ENCODE measurements at regions of chr13 and their contacts with region 1.

Region 1: GRCh38 chr13:79679334-79679733 is 198.4 kb downstream of the NDFIP2 start:
- DNase-seq: peak; percentile 85
- H3K4me3 ChIP-seq: no peak overlapping the region
- H3K27ac ChIP-seq: no peak overlapping the region
- H3K4me1 ChIP-seq: no peaks in the 10 kb centered on the region
- H3K27me3 ChIP-seq: no peaks in the 10 kb centered on the region
- CTCF ChIP-seq: peak; percentile 84

Region 2: GRCh38 chr13:79775830-79776229 is 96.5 kb after region 1 on chr13:
- intact Hi-C with region 1: loop called (anchors 5 kb)
- DNase-seq: peak; percentile 61
- H3K4me3 ChIP-seq: no peak overlapping the region
- H3K27ac ChIP-seq: peak overlapping the region; percentile 21
- H3K4me1 ChIP-seq: no peaks in the 10 kb centered on the region
- H3K27me3 ChIP-seq: no peaks in the 10 kb centered on the region
- CTCF ChIP-seq: peak; percentile 51

Region 3: DNA sequence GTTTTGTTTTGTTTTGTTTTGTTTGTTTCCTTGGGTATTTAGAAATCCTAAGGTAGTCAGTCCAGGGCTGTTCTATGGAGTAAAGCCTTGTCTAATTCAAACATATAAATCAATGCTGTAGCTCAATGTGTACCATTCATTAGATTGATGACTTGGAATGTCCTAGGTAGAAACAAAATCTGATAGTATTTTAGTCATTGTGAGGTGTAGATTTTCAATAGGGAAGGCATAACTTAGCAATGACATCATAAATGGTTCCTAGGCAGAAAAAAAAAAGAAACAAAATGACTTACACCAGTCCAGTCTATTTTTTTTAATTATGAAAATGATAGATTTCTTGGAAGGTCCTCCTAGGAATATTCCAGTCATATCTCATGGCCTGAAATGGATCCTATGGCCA is 471.7 kb after region 1 on chr13:
- intact Hi-C with region 1: no loop called
- DNase-seq: no peak
- H3K4me3 ChIP-seq: no peak overlapping the region
- H3K27ac ChIP-seq: no peak overlapping the region
- H3K4me1 ChIP-seq: no peaks in the 10 kb centered on the region
- H3K27me3 ChIP-seq: no peaks in the 10 kb centered on the region
- CTCF ChIP-seq: no peak

Region 4: GRCh38 chr13:80363890-80364503 is 684.7 kb after region 1 on chr13:
- intact Hi-C with region 1: loop called (anchors 5 kb)
- DNase-seq: no peak
- H3K4me3 ChIP-seq: no peak overlapping the region
- H3K27ac ChIP-seq: no peak overlapping the region
- H3K4me1 ChIP-seq: peaks cover 5% of the 10 kb centered on the region
- H3K27me3 ChIP-seq: no peaks in the 10 kb centered on the region
- CTCF ChIP-seq: peak; percentile 79

Measured in colonic mucosa (tissue), 4 donors.